ENCODE measurements at regions of chr15 and their contacts with region 1.

Region 1: GRCh38 chr15:60426870-60427508 is 29.2 kb upstream of the ANXA2 start:
- DNase-seq: peak; percentile 44
- H3K4me3 ChIP-seq: no peak overlapping the region
- CTCF ChIP-seq: no peak

Region 2: GRCh38 chr15:60397772-60398445 is 29.1 kb before region 1 on chr15 and contains the start of gene ANXA2:
- in situ Hi-C with region 1: loop called (anchors 5 kb)
- DNase-seq: peak; percentile 55
- H3K4me3 ChIP-seq: peak within 1 kb of the TSS; percentile 73
- CTCF ChIP-seq: no peak

Measured in astrocyte of the cerebellum (primary cell).